Caco-2 (cell line): ENCODE measurements at regions of chr15 and their contacts with region 1.

Region 1: GRCh38 chr15:100349696-100350433 is 8.1 kb upstream of the ADAMTS17 start:
- DNase-seq: peak; percentile 87 to 93
- H3K4me3 ChIP-seq: peak overlapping the region; percentile 47
- H3K4me3 Mint-ChIP-seq: peak overlapping the region; percentile 88
- H3K27ac Mint-ChIP-seq: peak overlapping the region; percentile 76
- H3K4me1 ChIP-seq: no peaks in the 10 kb centered on the region
- H3K4me1 Mint-ChIP-seq: no peaks in the 10 kb centered on the region
- H3K27me3 ChIP-seq: no peaks in the 10 kb centered on the region
- H3K27me3 Mint-ChIP-seq: peaks cover 7% of the 10 kb centered on the region
- CTCF ChIP-seq: peak; percentile 51 to 87

Region 2: GRCh38 chr15:100083572-100083971 is 266.3 kb before region 1 on chr15:
- CTCF ChIA-PET with region 1: no interaction called
- POLR2A ChIA-PET with region 1: no interaction called
- intact Hi-C with region 1: no loop called
- DNase-seq: no peak
- H3K4me3 ChIP-seq: no peak overlapping the region
- H3K4me3 Mint-ChIP-seq: no peak overlapping the region
- H3K27ac Mint-ChIP-seq: no peak overlapping the region
- H3K4me1 ChIP-seq: no peaks in the 10 kb centered on the region
- H3K4me1 Mint-ChIP-seq: no peaks in the 10 kb centered on the region
- H3K27me3 ChIP-seq: no peaks in the 10 kb centered on the region
- H3K27me3 Mint-ChIP-seq: no peaks in the 10 kb centered on the region
- CTCF ChIP-seq: no peak

Region 3: DNA sequence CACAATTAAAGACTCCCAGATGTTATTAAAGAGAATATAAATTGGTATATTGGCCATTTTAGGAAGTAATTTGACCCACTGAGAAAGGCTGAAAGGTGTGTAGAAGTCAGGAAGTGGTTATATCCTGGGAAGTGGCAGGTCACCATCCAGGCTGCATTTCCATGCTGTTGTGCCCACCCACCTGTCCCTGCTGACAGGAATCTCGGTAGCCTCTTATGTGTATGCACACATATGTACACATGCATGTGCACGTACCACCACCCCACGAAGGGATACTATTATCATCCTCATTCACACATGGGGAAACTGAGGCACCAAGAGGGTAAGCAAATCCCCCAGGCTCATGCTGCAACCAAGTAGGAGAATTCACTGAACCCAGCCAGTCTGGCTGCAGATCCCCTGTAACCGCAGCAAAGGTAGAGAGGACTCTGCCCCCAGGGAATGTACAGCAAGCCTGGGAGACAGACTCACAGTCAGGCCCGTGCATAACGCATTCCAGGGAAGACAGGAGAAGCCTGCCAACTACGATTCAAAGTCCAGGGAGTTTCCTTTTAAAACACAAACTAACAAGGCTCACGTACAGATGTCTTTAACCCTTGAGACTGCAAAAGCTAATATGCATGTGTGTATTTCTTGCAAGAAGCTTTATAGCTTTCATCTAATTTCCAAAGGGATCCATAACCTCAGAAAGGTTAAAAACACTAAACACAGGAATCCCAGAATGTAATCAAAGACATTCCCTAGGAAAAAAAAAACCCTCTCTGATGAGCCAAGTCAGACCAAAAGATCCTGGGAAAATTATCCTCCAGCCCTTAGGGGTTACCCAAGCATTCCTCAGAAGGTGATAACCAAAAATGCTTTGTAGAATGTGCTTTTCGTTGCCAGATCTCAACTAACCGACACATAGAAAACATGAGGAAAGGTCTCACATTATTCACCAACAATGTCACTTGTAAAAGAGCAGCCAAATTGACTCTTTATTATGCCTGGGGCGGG is 137.7 kb before region 1 on chr15:
- CTCF ChIA-PET with region 1: no interaction called
- POLR2A ChIA-PET with region 1: no interaction called
- intact Hi-C with region 1: loop called (anchors 1 kb)
- DNase-seq: peak; percentile 76 to 89
- H3K4me3 ChIP-seq: no peak overlapping the region
- H3K4me3 Mint-ChIP-seq: peak overlapping the region; percentile 61
- H3K27ac Mint-ChIP-seq: peak overlapping the region; percentile 58
- H3K4me1 ChIP-seq: peaks cover 26% of the 10 kb centered on the region
- H3K4me1 Mint-ChIP-seq: peaks cover 10% of the 10 kb centered on the region
- H3K27me3 ChIP-seq: no peaks in the 10 kb centered on the region
- H3K27me3 Mint-ChIP-seq: no peaks in the 10 kb centered on the region
- CTCF ChIP-seq: no peak

Region 4: GRCh38 chr15:100383302-100384107 is 33.6 kb after region 1 on chr15:
- CTCF ChIA-PET with region 1: interaction called, 12 read pairs
- POLR2A ChIA-PET with region 1: interaction called, 4 read pairs
- intact Hi-C with region 1: loop called (anchors 1 kb)
- DNase-seq: peak; percentile 44 to 47
- H3K4me3 ChIP-seq: no peak overlapping the region
- H3K4me3 Mint-ChIP-seq: no peak overlapping the region
- H3K27ac Mint-ChIP-seq: no peak overlapping the region
- H3K4me1 ChIP-seq: no peaks in the 10 kb centered on the region
- H3K4me1 Mint-ChIP-seq: no peaks in the 10 kb centered on the region
- H3K27me3 ChIP-seq: no peaks in the 10 kb centered on the region
- H3K27me3 Mint-ChIP-seq: no peaks in the 10 kb centered on the region
- CTCF ChIP-seq: peak; percentile 33 to 63

Region 5: GRCh38 chr15:100537331-100537730 is 187.5 kb after region 1 on chr15:
- CTCF ChIA-PET with region 1: no interaction called
- POLR2A ChIA-PET with region 1: no interaction called
- intact Hi-C with region 1: no loop called
- DNase-seq: no peak
- H3K4me3 ChIP-seq: no peak overlapping the region
- H3K4me3 Mint-ChIP-seq: no peak overlapping the region
- H3K27ac Mint-ChIP-seq: no peak overlapping the region
- H3K4me1 ChIP-seq: no peaks in the 10 kb centered on the region
- H3K4me1 Mint-ChIP-seq: no peaks in the 10 kb centered on the region
- H3K27me3 ChIP-seq: no peaks in the 10 kb centered on the region
- H3K27me3 Mint-ChIP-seq: peaks cover 16% of the 10 kb centered on the region
- CTCF ChIP-seq: no peak

Region 6: DNA sequence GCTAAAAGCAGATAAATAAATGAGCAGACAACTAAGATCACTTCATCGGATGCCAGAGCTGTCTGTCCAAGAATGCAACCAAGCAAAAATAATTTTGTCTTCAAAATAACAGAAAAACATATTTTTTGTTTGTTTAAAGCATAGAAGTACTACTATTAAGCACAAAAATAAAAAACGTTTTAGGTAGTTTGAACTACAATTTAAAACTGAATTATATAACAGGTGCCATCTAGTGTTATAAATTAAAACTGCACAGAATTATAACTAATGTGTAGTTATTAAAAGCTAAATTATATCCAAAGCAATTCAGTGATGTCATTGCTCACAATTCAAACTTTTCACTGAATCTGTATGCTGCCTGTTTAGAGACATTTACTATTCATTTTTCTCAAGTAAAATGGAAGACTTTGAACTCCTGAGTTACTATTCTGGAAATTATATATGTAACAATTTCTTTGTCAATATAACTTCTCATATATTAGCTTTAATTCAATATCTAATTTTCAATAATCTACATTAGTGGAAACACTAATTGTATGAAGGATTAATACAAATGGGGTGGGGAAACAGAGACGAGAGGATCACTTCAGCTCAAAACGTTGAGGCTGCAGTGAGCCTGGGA is 222.6 kb after region 1 on chr15:
- CTCF ChIA-PET with region 1: interaction called, 3 read pairs
- POLR2A ChIA-PET with region 1: no interaction called
- intact Hi-C with region 1: loop called (anchors 5 kb)
- DNase-seq: no peak
- H3K4me3 ChIP-seq: no peak overlapping the region
- H3K4me3 Mint-ChIP-seq: no peak overlapping the region
- H3K27ac Mint-ChIP-seq: no peak overlapping the region
- H3K4me1 ChIP-seq: no peaks in the 10 kb centered on the region
- H3K4me1 Mint-ChIP-seq: no peaks in the 10 kb centered on the region
- H3K27me3 ChIP-seq: no peaks in the 10 kb centered on the region
- H3K27me3 Mint-ChIP-seq: no peaks in the 10 kb centered on the region
- CTCF ChIP-seq: peak in 1 of 2 experiments; percentile 28

Region 7: DNA sequence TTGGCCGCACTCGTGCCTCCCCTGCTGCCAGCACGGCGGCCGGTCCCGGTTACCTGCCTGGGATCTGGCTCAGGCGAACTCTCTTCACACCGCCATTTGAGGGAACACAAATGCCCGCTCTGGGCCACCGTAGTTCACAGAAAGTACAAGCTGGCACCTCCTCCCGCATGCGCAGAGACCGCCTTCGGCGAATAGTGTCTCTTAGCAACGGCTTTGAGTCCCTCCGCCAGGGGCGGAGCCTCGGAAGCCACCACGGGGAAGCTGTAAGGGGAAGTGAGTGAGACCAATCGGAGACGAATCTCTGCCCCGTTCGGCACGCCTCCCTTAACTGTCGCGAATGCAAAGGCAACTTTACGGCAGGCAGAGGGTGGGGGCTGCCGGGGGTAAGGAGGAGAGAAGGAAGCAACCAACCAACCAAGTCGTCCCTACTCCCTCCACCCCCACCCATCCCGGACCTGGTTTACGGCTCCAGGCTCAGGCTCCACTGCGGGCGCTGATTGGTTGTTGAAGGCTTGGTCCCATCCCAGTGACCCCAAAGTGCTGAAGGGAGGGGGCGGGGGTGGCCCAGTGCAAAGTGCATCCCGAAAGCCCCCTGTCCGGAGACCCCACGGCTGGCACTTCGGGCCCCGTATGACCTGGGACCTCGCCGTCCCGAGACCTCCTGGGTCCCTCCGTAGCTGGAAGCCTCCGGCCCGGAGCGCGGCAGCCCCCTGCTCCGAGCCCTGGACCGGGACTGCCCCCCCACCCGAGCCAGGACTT is 252.4 kb after region 1 on chr15 and contains the starts of genes ASB7 and LINS1:
- CTCF ChIA-PET with region 1: interaction called, 11 read pairs
- POLR2A ChIA-PET with region 1: no interaction called
- intact Hi-C with region 1: no loop called
- DNase-seq: peak; percentile 99 to 100
- H3K4me3 ChIP-seq: peak within 1 kb of the TSS; percentile 92
- H3K4me3 Mint-ChIP-seq: no peak within 1 kb of the TSS
- H3K27ac Mint-ChIP-seq: no peak within 1 kb of the TSS
- H3K4me1 ChIP-seq: peaks cover 9% of the 10 kb centered on the region; the same call in 1 of the 2 replicates
- H3K4me1 Mint-ChIP-seq: no peaks in the 10 kb centered on the region
- H3K27me3 ChIP-seq: no peaks in the 10 kb centered on the region
- H3K27me3 Mint-ChIP-seq: no peaks in the 10 kb centered on the region
- CTCF ChIP-seq: no peak
- total RNA-seq, gene ASB7: 14.4 and 14.5 TPM in 2 replicates
- total RNA-seq, gene LINS1: 11.0 and 12.0 TPM in 2 replicates

Region 8: DNA sequence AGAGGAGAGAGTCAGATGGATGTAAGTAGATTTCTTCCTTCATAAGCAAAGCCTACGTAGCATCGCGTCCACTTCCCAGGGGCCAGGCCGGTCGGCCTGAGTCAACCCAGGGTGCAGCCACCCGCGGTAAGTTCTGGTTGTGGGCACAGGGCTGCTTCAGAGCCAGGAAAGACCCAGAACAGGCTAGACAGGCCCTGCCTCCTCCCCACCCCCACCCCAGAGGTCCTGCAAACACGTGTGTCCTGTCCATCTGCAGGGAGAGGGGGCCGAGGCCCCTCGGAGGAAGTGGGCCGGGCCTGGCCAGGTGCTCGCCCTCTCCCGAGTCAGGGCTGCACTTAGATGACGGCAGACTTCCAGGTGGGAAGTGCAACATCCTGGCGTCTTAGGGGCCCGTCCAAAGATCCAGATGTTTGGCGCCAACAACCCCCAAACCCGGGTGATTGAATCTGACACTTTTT is 429.0 kb after region 1 on chr15:
- CTCF ChIA-PET with region 1: no interaction called
- POLR2A ChIA-PET with region 1: no interaction called
- intact Hi-C with region 1: no loop called
- DNase-seq: peak in 1 of 2 experiments; percentile 14
- H3K4me3 ChIP-seq: no peak overlapping the region
- H3K4me3 Mint-ChIP-seq: no peak overlapping the region
- H3K27ac Mint-ChIP-seq: no peak overlapping the region
- H3K4me1 ChIP-seq: no peaks in the 10 kb centered on the region
- H3K4me1 Mint-ChIP-seq: no peaks in the 10 kb centered on the region
- H3K27me3 ChIP-seq: no peaks in the 10 kb centered on the region
- H3K27me3 Mint-ChIP-seq: no peaks in the 10 kb centered on the region
- CTCF ChIP-seq: no peak

Region 9: DNA sequence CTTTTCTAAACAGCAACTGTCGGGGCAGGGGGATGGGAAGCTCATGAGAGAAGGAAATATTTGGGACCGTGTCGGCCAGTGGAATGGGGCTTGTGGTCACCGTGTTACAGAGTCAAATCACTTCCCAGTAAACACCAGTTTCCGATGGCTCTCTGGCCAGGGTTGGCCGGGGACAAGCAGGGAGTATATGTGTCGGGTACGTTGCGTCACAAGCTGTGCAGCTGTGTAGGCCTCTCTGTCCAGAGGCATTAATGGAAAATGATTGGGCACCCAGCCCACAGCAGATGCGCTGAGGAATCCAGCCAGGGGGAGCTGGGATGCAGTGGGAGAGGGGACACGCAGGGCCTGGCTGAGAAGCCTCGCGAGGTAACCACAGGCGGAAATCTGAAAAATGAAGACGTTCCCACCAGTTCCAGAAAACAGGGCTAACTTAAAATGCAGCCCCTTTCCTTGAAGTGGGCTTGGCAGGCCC is 514.0 kb after region 1 on chr15:
- CTCF ChIA-PET with region 1: no interaction called
- POLR2A ChIA-PET with region 1: no interaction called
- intact Hi-C with region 1: no loop called
- DNase-seq: no peak
- H3K4me3 ChIP-seq: no peak overlapping the region
- H3K4me3 Mint-ChIP-seq: no peak overlapping the region
- H3K27ac Mint-ChIP-seq: no peak overlapping the region
- H3K4me1 ChIP-seq: no peaks in the 10 kb centered on the region
- H3K4me1 Mint-ChIP-seq: no peaks in the 10 kb centered on the region
- H3K27me3 ChIP-seq: no peaks in the 10 kb centered on the region
- H3K27me3 Mint-ChIP-seq: no peaks in the 10 kb centered on the region
- CTCF ChIP-seq: no peak